A549 (cell line): ENCODE measurements at regions of chr5 and their contacts with region 1.

Region 1: DNA sequence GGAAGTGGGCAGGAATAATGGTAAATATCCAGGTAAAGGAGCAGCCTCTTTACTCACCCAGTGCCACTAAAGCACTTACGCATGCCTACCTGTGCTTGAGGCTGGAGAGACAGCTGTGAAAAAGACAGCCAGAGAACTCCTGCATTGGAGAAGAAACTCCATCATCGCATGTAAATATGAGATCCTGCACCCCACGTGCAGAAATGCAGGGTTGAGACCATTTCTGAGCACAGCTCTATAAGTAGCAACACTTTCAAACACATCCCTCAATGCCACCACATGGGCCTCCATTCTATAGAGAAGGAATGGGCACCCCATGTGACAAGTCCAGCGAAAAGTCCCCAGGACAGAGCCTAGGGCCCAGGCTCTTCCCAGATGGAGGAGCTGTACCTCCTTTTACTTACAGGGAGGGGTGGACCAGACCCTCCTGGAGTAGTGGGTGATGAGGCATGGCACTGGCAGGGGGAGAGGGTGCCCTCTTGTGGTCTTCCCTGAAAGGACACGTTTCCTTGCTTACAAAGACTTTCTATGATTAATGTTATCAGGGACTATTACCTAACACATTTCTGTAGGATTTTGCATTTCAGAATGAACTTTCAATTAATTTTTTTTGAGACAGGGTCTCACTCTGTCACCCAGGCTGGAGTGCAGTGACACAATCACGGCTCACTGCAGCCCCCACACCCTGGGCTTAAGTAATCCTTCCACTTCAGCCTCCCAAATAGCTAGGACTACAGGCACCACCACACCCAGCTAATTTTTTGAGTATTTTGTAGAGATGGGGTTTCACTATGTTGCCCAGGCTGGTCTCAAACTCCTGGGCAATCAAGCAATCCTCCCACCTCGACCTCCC is 55.3 kb upstream of the IL17B start:
- DNase-seq: peak; percentile 61 to 88
- ATAC-seq: peak; percentile 56 to 72
- H3K4me3 ChIP-seq: no peak overlapping the region
- H3K27ac ChIP-seq: 0 out of 6 replicates have a peak overlapping the region, but pooled peaks of 1 of the 2 experiments have one; percentile 9
- H3K4me1 ChIP-seq: peaks cover 13% of the 10 kb centered on the region
- CTCF ChIP-seq: peak; percentile 86
- EP300 ChIP-seq: no peak
- POLR2A ChIP-seq: no peak
- RAD21 ChIP-seq: peak; percentile 74

Region 2: DNA sequence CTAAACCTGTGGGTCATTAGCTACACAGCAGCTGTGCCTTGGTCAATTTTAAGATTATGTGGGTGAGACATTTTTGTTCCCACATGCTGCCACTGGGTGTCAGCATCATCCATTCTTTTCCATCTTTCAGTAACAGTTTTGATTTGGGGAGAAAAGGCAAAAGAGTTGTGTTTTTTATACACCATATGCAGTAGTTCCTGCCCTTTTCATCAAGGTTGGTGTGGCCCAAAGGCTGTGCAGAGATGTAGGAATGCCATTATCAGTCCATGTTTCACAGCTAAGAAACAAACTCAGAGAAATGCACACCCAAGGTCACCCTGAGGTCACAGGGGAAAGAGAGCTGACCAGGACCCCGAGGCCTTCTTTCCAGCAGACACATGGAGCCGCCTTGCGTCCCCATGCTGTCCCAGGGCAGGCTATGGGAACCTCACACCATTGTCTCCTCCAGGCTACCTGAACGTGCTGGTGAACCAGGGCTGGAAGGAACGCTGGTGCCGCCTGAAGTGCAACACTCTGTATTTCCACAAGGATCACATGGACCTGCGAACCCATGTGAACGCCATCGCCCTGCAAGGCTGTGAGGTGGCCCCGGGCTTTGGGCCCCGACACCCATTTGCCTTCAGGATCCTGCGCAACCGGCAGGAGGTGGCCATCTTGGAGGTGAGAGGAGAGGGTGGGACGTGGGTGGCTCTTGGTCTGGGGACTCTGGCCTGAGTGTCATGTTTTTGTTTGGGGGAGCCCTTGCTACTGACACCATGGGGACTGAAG is 116.9 kb before region 1 on chr5:
- CTCF ChIA-PET with region 1: interaction called, 63 read pairs
- POLR2A ChIA-PET with region 1: no interaction called
- DNase-seq: peak; percentile 51 to 69
- ATAC-seq: peak; percentile 55 to 72; a peak in 5 of 6 replicates
- H3K4me3 ChIP-seq: no peak overlapping the region
- H3K27ac ChIP-seq: peak overlapping the region in 1 of 2 experiments; percentile 28; a peak in 1 of 6 replicates
- H3K4me1 ChIP-seq: peaks cover 15% of the 10 kb centered on the region
- CTCF ChIP-seq: peak; percentile 87
- EP300 ChIP-seq: no peak
- POLR2A ChIP-seq: no peak
- RAD21 ChIP-seq: peak; percentile 80 to 87

Region 3: GRCh38 chr5:149406203-149406978 is 28.0 kb before region 1 on chr5:
- CTCF ChIA-PET with region 1: interaction called, 85 read pairs
- POLR2A ChIA-PET with region 1: interaction called, 3 read pairs
- DNase-seq: no peak
- ATAC-seq: no peak
- H3K4me3 ChIP-seq: no peak overlapping the region
- H3K27ac ChIP-seq: peak overlapping the region; percentile 60 to 82; a peak in 4 of 6 replicates
- H3K4me1 ChIP-seq: peaks cover 39% of the 10 kb centered on the region
- CTCF ChIP-seq: no peak
- EP300 ChIP-seq: no peak
- POLR2A ChIP-seq: no peak
- RAD21 ChIP-seq: no peak

Region 4: GRCh38 chr5:149422366-149423048 is 11.9 kb before region 1 on chr5:
- CTCF ChIA-PET with region 1: interaction called, 58 read pairs
- POLR2A ChIA-PET with region 1: no interaction called
- DNase-seq: no peak
- ATAC-seq: peak; percentile 24 to 61; a peak in 3 of 6 replicates
- H3K4me3 ChIP-seq: no peak overlapping the region
- H3K27ac ChIP-seq: peak overlapping the region; percentile 17 to 65; a peak in 3 of 6 replicates
- H3K4me1 ChIP-seq: peaks cover 18% of the 10 kb centered on the region
- CTCF ChIP-seq: no peak
- EP300 ChIP-seq: no peak
- POLR2A ChIP-seq: no peak
- RAD21 ChIP-seq: no peak

Region 5: GRCh38 chr5:149551200-149552037 is 117.0 kb after region 1 on chr5 and contains the start of gene CSNK1A1:
- CTCF ChIA-PET with region 1: interaction called, 209 read pairs
- POLR2A ChIA-PET with region 1: interaction called, 17 read pairs
- DNase-seq: peak; percentile 98 to 99
- ATAC-seq: peak; percentile 96
- H3K4me3 ChIP-seq: peak within 1 kb of the TSS; percentile 85
- H3K27ac ChIP-seq: peak within 1 kb of the TSS; percentile 97
- H3K4me1 ChIP-seq: peaks cover 30% of the 10 kb centered on the region
- CTCF ChIP-seq: peak; percentile 78
- EP300 ChIP-seq: no peak
- POLR2A ChIP-seq: peak; percentile 58
- RAD21 ChIP-seq: peak; percentile 71 to 73
- polyA plus RNA-seq, gene CSNK1A1: 180 and 218 TPM in 2 replicates

Region 6: DNA sequence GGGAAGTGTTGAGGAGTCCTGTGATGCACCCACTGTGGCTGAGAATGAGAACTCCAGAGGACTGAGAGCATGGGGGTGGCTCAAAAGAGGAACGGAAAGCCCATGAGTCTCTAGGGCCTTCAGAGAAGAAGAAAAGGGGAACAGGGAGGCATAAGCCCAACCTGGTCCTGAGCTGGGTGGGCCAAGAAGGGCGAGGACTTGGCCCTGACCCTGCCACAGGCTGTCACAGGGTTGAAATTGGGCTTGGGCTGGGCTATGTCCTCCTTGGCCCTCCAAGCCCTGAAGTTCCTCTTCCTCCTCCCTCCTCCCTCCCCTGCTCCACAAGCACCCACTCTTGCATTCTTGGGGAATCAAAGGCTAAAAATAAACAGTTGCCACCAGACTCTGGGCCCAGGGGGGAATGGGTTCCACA is 246.4 kb after region 1 on chr5:
- CTCF ChIA-PET with region 1: no interaction called
- POLR2A ChIA-PET with region 1: no interaction called
- DNase-seq: no peak
- ATAC-seq: no peak
- H3K4me3 ChIP-seq: no peak overlapping the region
- H3K27ac ChIP-seq: no peak overlapping the region
- H3K4me1 ChIP-seq: no peaks in the 10 kb centered on the region
- CTCF ChIP-seq: no peak
- EP300 ChIP-seq: no peak
- POLR2A ChIP-seq: no peak
- RAD21 ChIP-seq: no peak